PC-3 (cell line): ENCODE measurements at regions of chr11 and their contacts with region 1.

Region 1: GRCh38 chr11:128172046-128172878 is 415.1 kb downstream of the ETS1 start:
- DNase-seq: peak; percentile 95
- ATAC-seq: peak; percentile 89
- H3K4me3 ChIP-seq: no peak overlapping the region
- H3K27ac ChIP-seq: no peak overlapping the region
- H3K4me1 ChIP-seq: peaks cover 20% of the 10 kb centered on the region
- H3K27me3 ChIP-seq: no peaks in the 10 kb centered on the region
- CTCF ChIP-seq: peak; percentile 96

Region 2: DNA sequence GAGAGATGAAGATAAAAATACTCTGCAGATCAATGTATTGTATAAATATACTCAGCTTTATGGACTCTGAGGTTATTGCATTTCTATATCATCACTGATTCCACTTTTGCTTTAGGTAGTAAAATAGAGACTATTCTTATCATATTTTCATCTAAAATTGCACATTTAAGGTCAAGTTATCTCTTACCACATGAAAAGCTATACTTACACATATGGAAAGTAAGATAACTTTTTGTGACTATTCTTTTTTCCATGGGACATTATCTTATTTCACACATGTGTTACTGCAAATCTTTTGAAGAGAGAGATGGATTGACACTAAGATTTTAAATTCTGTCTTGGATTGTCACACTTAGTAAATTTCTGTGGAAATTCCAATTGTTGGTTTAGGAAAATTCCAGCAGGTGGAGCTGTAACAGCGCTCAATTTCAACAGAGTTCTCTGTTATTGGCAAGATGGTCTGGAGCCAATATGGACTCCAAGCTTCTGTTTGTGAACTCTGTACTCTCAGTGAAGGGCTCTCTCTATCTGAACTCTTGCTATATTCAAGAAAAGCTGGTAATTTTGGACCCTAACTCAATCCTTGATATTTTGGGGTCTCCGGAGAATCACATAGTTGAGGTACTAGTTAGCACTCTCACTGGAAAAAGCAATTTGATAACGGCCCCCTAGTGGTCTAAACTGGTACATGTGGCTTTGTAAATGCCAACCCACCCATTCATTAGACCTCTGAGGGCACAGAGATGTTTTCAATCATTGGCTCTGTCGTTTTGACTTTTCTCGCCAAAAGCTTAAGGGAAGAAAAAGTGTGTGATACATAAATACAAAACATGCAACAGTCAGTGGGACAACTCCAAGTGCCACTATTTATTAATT is 14.6 kb before region 1 on chr11:
- CTCF ChIA-PET with region 1: interaction called, 4 read pairs
- POLR2A ChIA-PET with region 1: no interaction called
- intact Hi-C with region 1: loop called (anchors 1 kb)
- DNase-seq: peak; percentile 93
- ATAC-seq: peak; percentile 65
- H3K4me3 ChIP-seq: peak overlapping the region; percentile 46; the same call in 1 of the 2 replicates
- H3K27ac ChIP-seq: no peak overlapping the region
- H3K4me1 ChIP-seq: peaks cover 32% of the 10 kb centered on the region
- H3K27me3 ChIP-seq: no peaks in the 10 kb centered on the region
- CTCF ChIP-seq: peak; percentile 99

Region 3: DNA sequence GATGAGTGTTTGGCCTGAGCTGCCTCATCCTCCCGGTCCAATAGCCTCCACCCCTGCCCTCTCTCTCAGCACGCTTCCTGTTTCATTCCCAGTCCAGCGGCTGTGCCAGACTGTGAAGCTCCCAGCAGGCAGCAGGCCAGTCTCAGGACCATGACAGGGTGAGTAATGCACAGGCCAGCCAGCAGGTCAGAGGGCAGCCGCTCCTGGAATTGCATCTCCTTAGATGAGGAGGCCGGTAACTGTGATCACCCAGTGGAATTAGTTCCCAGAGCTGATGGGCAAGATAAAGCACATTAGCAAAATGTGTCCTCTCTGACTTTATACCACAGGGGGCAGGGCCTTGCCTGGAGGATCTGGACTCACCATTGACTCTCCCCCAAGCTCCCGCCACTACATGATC is 163.9 kb after region 1 on chr11:
- CTCF ChIA-PET with region 1: interaction called, 4 read pairs
- POLR2A ChIA-PET with region 1: interaction called, 10 read pairs
- intact Hi-C with region 1: loop called (anchors 1 kb)
- DNase-seq: peak; percentile 98
- ATAC-seq: peak; percentile 52
- H3K4me3 ChIP-seq: no peak overlapping the region
- H3K27ac ChIP-seq: peak overlapping the region; percentile 96
- H3K4me1 ChIP-seq: peaks cover 51% of the 10 kb centered on the region
- H3K27me3 ChIP-seq: no peaks in the 10 kb centered on the region
- CTCF ChIP-seq: no peak

Region 4: DNA sequence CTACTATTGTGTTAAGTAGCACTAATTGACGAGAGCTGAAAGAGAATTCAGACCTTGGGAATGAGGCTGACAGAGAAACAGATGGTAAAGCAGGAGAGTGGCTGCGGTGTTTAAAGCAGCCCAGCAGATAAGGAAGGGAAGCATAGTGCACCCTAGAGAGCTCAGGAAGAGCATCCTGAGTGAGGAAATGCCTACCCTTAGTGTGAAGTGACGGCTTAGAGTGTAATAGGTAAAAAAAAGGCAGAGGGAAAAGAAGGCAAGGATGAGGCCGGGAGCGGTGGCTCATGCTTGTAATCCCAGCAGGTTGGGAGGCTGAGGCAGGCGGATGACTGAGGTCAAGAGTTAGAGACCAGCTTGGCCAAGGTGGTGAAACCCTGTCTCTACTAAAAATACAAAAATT is 437.5 kb after region 1 on chr11:
- CTCF ChIA-PET with region 1: interaction called, 14 read pairs
- POLR2A ChIA-PET with region 1: no interaction called
- intact Hi-C with region 1: no loop called
- DNase-seq: no peak
- ATAC-seq: no peak
- H3K4me3 ChIP-seq: no peak overlapping the region
- H3K27ac ChIP-seq: no peak overlapping the region
- H3K4me1 ChIP-seq: no peaks in the 10 kb centered on the region
- H3K27me3 ChIP-seq: no peaks in the 10 kb centered on the region
- CTCF ChIP-seq: no peak

Region 5: DNA sequence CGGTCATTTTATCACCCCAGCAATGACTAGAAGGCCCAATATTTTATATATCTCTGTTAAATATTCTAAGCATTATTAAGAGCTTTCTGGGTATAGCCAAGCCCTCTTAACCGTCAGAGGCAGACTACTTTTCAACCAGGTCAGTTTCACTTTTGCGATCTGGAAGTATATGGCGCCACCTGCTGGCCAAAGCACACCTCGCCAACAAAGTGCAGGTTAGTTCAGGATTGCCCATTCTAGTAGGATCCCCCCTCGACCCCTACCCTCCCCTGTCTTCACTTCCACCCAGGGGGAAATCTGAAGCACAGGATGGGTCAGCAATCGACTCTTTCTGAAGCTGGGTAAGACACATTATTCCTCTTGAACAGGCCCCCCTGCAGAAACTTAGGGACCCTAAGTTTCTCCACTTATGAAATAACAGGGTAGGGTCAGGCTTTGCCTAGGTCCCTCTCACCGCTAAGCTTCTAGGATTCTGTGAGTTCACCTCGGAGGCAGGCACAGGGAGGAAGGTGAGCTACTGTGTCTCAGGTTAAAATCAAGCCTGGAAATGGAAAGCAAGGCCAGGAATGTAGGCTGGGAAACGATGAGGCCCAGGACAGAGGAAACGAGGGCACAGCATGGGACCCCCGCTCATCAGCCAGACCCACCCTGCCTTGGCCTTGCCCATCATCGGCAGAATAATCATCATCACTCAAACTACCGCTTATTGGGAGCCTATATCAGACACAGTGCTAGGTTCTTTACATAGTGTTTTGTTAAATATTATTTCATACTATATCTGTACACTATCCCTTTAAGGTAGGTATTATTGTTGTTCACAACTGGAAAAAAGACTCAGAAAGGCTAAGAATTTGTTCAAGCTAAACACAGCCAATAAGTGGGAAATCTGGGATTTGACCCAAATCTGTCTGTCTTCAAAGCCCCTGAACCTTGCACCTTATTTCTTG is 659.2 kb after region 1 on chr11:
- CTCF ChIA-PET with region 1: interaction called, 5 read pairs
- POLR2A ChIA-PET with region 1: no interaction called
- intact Hi-C with region 1: loop called (anchors 1 kb)
- DNase-seq: peak; percentile 91
- ATAC-seq: peak; percentile 94
- H3K4me3 ChIP-seq: peak overlapping the region; percentile 50; the same call in 1 of the 2 replicates
- H3K27ac ChIP-seq: no peak overlapping the region
- H3K4me1 ChIP-seq: peaks cover 18% of the 10 kb centered on the region; the same call in 1 of the 2 replicates
- H3K27me3 ChIP-seq: no peaks in the 10 kb centered on the region
- CTCF ChIP-seq: peak; percentile 97